RWPE1 (cell line): ENCODE measurements at regions of chrX and their contacts with region 1.

Region 1: GRCh38 chrX:103845165-103845653 is 13.2 kb upstream of the RAB9B start:
- DNase-seq: peak; percentile 46
- H3K27ac ChIP-seq: no peak overlapping the region
- CTCF ChIP-seq: peak; percentile 64

Region 2: GRCh38 chrX:103878466-103879122 is 33.4 kb after region 1 on chrX:
- CTCF ChIA-PET with region 1: no interaction called
- POLR2A ChIA-PET with region 1: no interaction called
- DNase-seq: peak; percentile 55
- H3K27ac ChIP-seq: no peak overlapping the region
- CTCF ChIP-seq: no peak

Region 3: DNA sequence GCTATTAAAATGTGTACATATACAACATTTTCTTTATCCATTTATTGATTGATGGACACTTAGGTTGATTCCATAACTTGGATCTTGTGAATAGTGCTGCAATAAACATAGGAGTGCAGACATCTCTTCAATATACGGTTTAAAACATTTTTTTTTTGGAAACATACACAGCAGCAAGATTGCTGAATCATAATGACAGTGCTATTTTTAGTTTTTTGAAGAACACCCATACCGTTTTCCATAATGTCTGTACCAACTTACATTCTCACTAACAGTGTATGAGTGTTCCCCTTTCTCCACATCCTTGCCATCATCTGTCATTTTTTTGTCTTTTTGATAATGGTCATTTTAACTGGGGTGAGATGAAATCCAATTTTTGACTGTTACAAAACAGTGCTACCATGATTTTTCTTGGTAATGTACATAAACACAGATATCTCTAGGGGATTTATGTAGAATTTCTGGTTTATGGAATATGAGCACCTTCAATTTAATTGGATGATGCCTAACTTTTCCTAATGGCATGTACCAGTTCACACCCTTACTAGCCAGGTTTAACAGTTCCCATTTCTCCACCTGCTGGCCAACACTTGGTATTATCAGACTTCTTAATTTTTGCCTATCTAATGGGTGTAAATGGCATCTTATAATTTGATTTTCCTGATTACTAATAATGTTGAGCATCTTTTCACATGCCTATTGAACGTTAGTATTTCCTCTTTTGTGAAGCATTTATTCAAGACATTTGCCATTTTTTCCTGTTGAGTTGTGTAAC is 96.2 kb after region 1 on chrX:
- CTCF ChIA-PET with region 1: interaction called, 12 read pairs
- POLR2A ChIA-PET with region 1: no interaction called
- DNase-seq: peak; percentile 13
- H3K27ac ChIP-seq: no peak overlapping the region
- CTCF ChIP-seq: peak; percentile 32